Activated CD8-positive, alpha-beta T cell treated with anti-CD3 and anti-CD28 coated beads for 36 hours (primary cell): ENCODE measurements at regions of chr16 and their contacts with region 1.

Region 1: GRCh38 chr16:70380861-70381603 is 34.3 kb downstream of the DDX19A start:
- DNase-seq: peak; percentile 98
- ATAC-seq: peak; percentile 92
- H3K4me3 Mint-ChIP-seq: peak overlapping the region; percentile 84
- H3K27ac Mint-ChIP-seq: peak overlapping the region; percentile 98
- H3K4me1 Mint-ChIP-seq: peaks cover 9% of the 10 kb centered on the region
- H3K27me3 Mint-ChIP-seq: no peaks in the 10 kb centered on the region
- CTCF ChIP-seq: no peak

Region 2: DNA sequence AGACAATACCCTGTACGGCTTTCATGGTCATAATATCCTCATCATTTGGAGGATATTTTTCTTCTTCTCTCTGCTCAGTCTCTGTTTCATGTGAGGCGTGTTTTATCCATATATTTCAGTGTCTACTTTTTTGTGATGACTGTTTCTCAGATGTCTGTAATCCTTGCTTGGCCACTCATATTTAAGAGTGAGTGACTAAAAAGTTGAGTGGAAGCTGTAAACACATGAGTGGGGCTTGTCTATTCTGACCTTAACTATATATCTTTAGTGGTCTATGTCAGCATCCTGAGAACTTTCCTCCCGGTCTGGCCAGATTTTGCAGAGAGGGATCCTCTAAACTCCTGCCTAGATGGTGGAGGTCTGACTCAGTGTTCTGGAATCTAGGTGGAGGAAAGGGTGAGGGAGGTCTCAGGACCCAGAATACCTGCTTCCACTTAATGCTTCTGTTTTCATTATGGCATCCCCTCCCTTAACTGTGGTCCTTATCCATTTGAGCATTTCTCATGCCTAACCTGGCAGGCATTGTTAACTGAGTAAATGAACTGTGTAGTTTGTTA is 76.1 kb before region 1 on chr16:
- CTCF ChIA-PET with region 1: no interaction called
- POLR2A ChIA-PET with region 1: no interaction called
- intact Hi-C with region 1: no loop called
- DNase-seq: no peak
- ATAC-seq: no peak
- H3K4me3 Mint-ChIP-seq: no peak overlapping the region
- H3K27ac Mint-ChIP-seq: peak overlapping the region; percentile 41
- H3K4me1 Mint-ChIP-seq: peaks cover 36% of the 10 kb centered on the region
- H3K27me3 Mint-ChIP-seq: no peaks in the 10 kb centered on the region
- CTCF ChIP-seq: no peak

Region 3: DNA sequence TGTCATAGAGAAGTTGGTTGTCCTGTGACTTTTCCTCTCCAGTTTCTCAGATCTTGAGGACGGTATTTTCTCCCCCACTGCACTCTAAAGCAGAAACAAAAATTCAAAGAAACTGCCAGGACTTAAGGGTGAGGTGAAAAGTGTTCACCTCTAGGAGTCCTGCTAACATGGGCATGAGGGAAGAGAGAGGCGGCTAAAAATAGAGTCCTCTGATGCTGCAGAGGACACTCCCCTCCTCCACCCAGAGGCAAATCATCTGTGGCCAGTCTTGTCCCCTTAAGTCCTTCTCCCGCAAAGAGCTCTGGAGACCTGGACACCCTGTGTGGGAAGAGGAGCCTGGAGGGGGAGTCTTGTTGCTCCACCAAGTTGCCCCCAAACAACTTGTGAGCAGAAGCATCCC is 39.0 kb before region 1 on chr16:
- CTCF ChIA-PET with region 1: interaction called, 3 read pairs
- POLR2A ChIA-PET with region 1: interaction called, 17 read pairs
- intact Hi-C with region 1: no loop called
- DNase-seq: no peak
- ATAC-seq: no peak
- H3K4me3 Mint-ChIP-seq: no peak overlapping the region
- H3K27ac Mint-ChIP-seq: no peak overlapping the region
- H3K4me1 Mint-ChIP-seq: peaks cover 9% of the 10 kb centered on the region
- H3K27me3 Mint-ChIP-seq: no peaks in the 10 kb centered on the region
- CTCF ChIP-seq: no peak

Region 4: GRCh38 chr16:70395345-70395901 is 14.4 kb after region 1 on chr16:
- CTCF ChIA-PET with region 1: interaction called, 12 read pairs
- POLR2A ChIA-PET with region 1: interaction called, 34 read pairs
- intact Hi-C with region 1: no loop called
- DNase-seq: peak; percentile 73
- ATAC-seq: peak; percentile 93
- H3K4me3 Mint-ChIP-seq: no peak overlapping the region
- H3K27ac Mint-ChIP-seq: no peak overlapping the region
- H3K4me1 Mint-ChIP-seq: peaks cover 4% of the 10 kb centered on the region
- H3K27me3 Mint-ChIP-seq: no peaks in the 10 kb centered on the region
- CTCF ChIP-seq: peak; percentile 85

Region 5: DNA sequence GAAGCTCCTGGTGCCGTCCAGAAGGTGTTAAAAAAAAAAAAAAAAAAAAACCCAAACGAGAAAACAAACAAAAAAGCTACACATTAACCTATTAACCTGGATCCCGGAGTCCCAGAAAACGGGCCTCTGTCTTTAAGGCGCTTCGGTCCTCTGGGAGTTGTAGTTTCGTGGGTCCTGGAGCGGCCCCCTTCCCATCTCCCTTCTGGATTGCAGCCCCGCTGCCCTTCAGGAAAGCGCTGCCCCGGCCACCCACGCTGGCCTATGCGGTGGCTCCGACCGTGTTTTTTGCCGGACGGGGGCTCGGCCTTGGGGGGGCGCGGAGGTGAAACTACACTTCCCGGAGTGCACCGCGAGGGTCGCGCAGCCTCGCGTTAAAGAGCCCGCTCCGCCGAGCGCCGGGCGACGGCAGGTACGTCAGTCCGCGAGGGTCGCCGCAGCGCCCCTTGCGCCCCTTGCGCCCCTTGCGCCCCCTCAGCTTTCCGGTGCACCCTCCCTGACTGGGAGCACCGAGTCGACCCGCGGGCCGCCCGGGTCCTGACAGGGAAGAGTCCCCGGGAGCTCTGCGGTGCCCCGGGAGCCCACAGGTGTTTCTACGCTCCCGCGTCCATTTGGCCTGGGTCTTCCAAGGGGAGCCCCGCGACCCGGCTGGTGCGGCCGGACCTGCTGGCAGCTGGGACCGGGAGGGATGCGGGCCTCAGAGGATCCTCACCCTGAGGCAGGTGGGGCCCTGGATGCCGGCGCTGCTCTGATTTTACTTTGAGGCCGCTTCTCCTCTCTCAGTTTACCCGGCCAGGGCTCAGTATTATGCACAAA is 73.4 kb after region 1 on chr16 and contains the start of gene FCSK:
- CTCF ChIA-PET with region 1: interaction called, 15 read pairs
- POLR2A ChIA-PET with region 1: interaction called, 8 read pairs
- intact Hi-C with region 1: no loop called
- DNase-seq: peak; percentile 71
- ATAC-seq: peak; percentile 93
- H3K4me3 Mint-ChIP-seq: peak within 1 kb of the TSS; percentile 86
- H3K27ac Mint-ChIP-seq: peak within 1 kb of the TSS; percentile 91
- H3K4me1 Mint-ChIP-seq: peaks cover 17% of the 10 kb centered on the region
- H3K27me3 Mint-ChIP-seq: no peaks in the 10 kb centered on the region
- CTCF ChIP-seq: no peak
- total RNA-seq, gene FCSK: 11.0 to 11.1 TPM

Region 6: GRCh38 chr16:70523076-70523742 is 142.2 kb after region 1 on chr16 and contains the start of gene COG4:
- CTCF ChIA-PET with region 1: interaction called, 3 read pairs
- POLR2A ChIA-PET with region 1: interaction called, 23 read pairs
- intact Hi-C with region 1: loop called (anchors 10 kb)
- DNase-seq: peak; percentile 96
- ATAC-seq: peak; percentile 89
- H3K4me3 Mint-ChIP-seq: peak within 1 kb of the TSS; percentile 88
- H3K27ac Mint-ChIP-seq: peak within 1 kb of the TSS; percentile 98
- H3K4me1 Mint-ChIP-seq: peaks cover 44% of the 10 kb centered on the region
- H3K27me3 Mint-ChIP-seq: no peaks in the 10 kb centered on the region
- CTCF ChIP-seq: no peak
- total RNA-seq, gene COG4: 38.0 to 39.0 TPM